ENCODE measurements at regions of chr19 and their contacts with region 1.

Region 1: GRCh38 chr19:18058208-18059030 is 28.3 kb downstream of the IL12RB1 start:
- DNase-seq: peak; percentile 91
- CTCF ChIP-seq: peak; percentile 83

Region 2: GRCh38 chr19:17951157-17951989 is 107.0 kb before region 1 on chr19:
- CTCF ChIA-PET with region 1: no interaction called
- POLR2A ChIA-PET with region 1: no interaction called
- DNase-seq: no peak
- CTCF ChIP-seq: no peak

Region 3: GRCh38 chr19:18007044-18007916 is 51.1 kb before region 1 on chr19:
- CTCF ChIA-PET with region 1: interaction called, 135 read pairs
- POLR2A ChIA-PET with region 1: no interaction called
- DNase-seq: peak; percentile 87
- CTCF ChIP-seq: peak; percentile 99

Region 4: DNA sequence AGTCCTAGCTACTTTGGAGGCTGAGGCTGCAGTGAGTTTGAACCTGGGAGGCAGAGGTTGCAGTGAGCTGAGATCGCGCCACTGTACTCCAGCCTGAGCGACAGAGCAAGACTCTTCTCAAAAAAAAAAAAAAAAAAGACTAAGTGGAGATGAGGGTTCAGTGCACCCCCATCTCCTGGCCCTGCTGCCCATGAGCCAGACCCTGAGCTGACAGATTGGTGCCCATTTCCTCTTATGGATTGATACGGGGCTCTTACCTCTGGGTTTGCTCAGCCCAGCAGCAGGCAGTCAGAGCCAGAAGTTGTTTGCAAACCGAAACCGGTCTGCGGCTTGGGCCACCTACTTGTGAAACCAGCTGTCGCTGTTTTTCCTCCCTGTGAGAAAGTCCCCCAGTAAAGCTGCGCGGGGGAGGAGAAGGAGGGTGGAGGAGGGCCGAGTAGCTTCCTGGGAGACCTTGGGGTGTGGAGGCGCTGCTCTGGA is 13.6 kb before region 1 on chr19:
- CTCF ChIA-PET with region 1: interaction called, 10 read pairs
- POLR2A ChIA-PET with region 1: no interaction called
- DNase-seq: peak; percentile 89
- CTCF ChIP-seq: no peak

Measured in GM10248 (cell line).